WTC11 (cell line): ENCODE measurements at regions of chr16 and their contacts with region 1.

Region 1: DNA sequence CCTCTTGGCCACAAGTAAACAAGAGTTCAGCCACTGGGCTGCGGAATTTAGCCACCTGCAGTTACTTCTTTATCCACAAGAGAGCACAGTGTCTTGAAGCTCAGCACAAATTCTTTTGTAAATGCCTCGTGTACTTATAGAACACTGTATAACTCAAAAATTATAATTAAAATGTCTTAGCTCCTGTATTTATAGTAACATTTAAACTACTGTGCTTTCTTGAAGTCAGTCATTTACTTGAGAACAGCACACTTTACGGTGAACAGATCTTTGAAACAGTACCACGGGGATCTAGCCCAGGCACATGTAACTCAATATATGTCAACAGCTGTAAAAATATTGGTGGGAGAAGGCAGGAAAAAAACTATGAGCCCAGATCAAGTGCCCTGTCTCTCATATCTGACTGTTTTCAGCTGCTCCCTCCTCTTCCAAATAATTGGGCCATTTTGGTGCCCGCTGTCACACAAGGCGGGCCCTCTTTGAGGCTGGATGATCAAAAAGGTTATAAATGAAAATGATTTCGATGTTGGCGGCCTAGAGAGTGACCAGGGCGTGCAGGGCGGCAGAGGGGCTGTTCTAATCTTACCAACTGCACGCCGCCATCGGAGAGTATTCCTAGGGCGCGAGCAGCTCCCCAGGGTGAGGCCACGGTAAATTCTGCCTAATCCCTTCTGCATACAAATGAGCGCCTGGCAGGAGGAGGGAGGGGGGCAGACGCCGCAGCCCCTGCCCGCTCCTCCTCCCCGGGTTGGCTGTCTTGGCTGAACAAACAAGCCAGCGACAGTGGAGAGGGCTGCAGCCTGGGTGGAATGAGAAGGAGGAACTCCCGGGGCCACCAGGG is 183.2 kb downstream of the C16orf78 start:
- DNase-seq: peak; percentile 68
- ATAC-seq: peak; percentile 91
- H3K4me3 Mint-ChIP-seq: no peak overlapping the region; the same call in 1 of the 2 replicates
- H3K27ac Mint-ChIP-seq: peak overlapping the region; percentile 87
- H3K4me1 Mint-ChIP-seq: no peaks in the 10 kb centered on the region
- H3K27me3 Mint-ChIP-seq: no peaks in the 10 kb centered on the region
- CTCF ChIP-seq: peak; percentile 53

Region 2: GRCh38 chr16:49407873-49408550 is 148.8 kb before region 1 on chr16:
- CTCF ChIA-PET with region 1: interaction called, 10 read pairs
- POLR2A ChIA-PET with region 1: no interaction called
- DNase-seq: peak; percentile 93
- ATAC-seq: peak; percentile 100
- H3K4me3 Mint-ChIP-seq: no peak overlapping the region
- H3K27ac Mint-ChIP-seq: no peak overlapping the region
- H3K4me1 Mint-ChIP-seq: peaks cover 3% of the 10 kb centered on the region
- H3K27me3 Mint-ChIP-seq: peaks cover 2% of the 10 kb centered on the region; the same call in 1 of the 2 replicates
- CTCF ChIP-seq: peak; percentile 81

Region 3: GRCh38 chr16:49537924-49538459 is 18.8 kb before region 1 on chr16:
- CTCF ChIA-PET with region 1: interaction called, 10 read pairs
- POLR2A ChIA-PET with region 1: interaction called, 6 read pairs
- DNase-seq: no peak
- ATAC-seq: peak; percentile 64
- H3K4me3 Mint-ChIP-seq: no peak overlapping the region
- H3K27ac Mint-ChIP-seq: no peak overlapping the region
- H3K4me1 Mint-ChIP-seq: peaks cover 18% of the 10 kb centered on the region
- H3K27me3 Mint-ChIP-seq: no peaks in the 10 kb centered on the region
- CTCF ChIP-seq: no peak

Region 4: DNA sequence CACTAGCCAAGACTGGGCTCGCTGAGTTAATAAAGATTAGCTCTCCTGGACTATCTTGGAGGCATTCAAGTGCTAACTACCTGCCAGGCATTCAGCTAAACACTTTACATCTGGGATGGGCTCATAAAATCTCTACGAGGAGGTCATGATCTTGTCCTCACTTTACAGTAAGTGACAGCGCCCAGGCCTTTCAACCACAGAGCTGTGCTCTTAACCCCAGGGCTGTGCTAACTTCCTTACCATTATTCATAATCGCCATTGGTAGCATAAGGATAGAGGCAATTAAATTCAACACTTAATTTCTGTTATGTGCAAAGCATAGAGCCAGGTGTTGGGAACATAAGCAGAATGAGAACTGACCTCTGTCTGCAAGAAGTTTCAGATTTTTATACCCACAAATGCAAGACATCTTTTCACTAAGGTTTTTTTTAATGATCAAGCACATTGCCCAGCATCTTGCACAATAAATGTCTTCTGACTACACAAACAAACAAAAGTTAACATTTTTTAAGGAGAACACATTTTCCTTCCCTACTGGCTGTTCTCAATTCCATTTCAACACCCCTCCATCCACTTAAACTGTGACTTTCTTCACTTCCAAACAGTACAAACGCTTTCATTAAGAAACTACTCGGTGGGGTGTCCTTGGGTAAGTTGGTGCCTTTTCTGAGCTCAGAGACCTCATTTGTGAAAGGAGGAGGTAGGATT is 10.9 kb before region 1 on chr16:
- CTCF ChIA-PET with region 1: interaction called, 16 read pairs
- POLR2A ChIA-PET with region 1: interaction called, 3 read pairs
- DNase-seq: no peak
- ATAC-seq: no peak
- H3K4me3 Mint-ChIP-seq: no peak overlapping the region
- H3K27ac Mint-ChIP-seq: no peak overlapping the region
- H3K4me1 Mint-ChIP-seq: peaks cover 59% of the 10 kb centered on the region
- H3K27me3 Mint-ChIP-seq: no peaks in the 10 kb centered on the region
- CTCF ChIP-seq: no peak

Region 5: GRCh38 chr16:49701789-49702494 is 145.1 kb after region 1 on chr16:
- CTCF ChIA-PET with region 1: interaction called, 16 read pairs
- POLR2A ChIA-PET with region 1: interaction called, 3 read pairs
- DNase-seq: peak; percentile 77
- ATAC-seq: peak; percentile 51
- H3K4me3 Mint-ChIP-seq: peak overlapping the region; percentile 59
- H3K27ac Mint-ChIP-seq: peak overlapping the region; percentile 96
- H3K4me1 Mint-ChIP-seq: peaks cover 79% of the 10 kb centered on the region
- H3K27me3 Mint-ChIP-seq: no peaks in the 10 kb centered on the region
- CTCF ChIP-seq: no peak

Region 6: DNA sequence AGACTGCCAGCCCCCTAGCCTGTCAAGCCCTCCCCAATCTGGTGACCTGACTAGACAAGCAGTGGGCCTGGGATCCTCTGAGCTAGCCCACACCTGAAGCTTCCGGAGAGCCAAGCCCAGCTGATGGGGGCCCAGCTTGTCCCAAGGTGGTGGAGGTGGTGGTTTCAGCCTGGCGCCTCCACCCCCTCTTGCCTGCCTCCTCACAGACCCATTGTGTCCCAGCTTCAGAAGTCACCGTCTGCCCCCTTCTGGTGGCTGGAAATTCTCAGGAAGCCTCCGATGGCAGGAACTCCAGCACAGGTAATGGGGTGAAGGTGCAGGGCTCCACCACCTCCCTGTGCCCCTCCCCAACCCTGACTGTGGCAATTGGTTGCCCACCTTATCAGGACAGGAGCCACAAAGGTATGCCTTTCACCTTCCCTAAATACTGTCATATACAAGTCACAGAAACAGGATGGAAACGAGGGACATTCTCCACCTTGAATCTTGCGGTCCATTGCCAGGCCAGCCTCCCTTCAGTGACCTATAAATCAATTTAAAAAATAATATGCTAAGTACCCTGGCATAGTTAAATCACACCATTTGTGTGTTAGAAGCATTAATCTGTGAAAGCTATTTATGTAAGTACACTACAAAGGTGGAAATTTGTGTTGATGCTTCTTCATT is 365.1 kb after region 1 on chr16:
- CTCF ChIA-PET with region 1: interaction called, 14 read pairs
- POLR2A ChIA-PET with region 1: no interaction called
- DNase-seq: peak; percentile 87
- ATAC-seq: peak; percentile 92
- H3K4me3 Mint-ChIP-seq: no peak overlapping the region
- H3K27ac Mint-ChIP-seq: no peak overlapping the region
- H3K4me1 Mint-ChIP-seq: peaks cover 3% of the 10 kb centered on the region
- H3K27me3 Mint-ChIP-seq: no peaks in the 10 kb centered on the region
- CTCF ChIP-seq: peak; percentile 55; the same call in 1 of the 2 replicates